IMR-90 (cell line): ENCODE measurements at regions of chr17 and their contacts with region 1.

Region 1: DNA sequence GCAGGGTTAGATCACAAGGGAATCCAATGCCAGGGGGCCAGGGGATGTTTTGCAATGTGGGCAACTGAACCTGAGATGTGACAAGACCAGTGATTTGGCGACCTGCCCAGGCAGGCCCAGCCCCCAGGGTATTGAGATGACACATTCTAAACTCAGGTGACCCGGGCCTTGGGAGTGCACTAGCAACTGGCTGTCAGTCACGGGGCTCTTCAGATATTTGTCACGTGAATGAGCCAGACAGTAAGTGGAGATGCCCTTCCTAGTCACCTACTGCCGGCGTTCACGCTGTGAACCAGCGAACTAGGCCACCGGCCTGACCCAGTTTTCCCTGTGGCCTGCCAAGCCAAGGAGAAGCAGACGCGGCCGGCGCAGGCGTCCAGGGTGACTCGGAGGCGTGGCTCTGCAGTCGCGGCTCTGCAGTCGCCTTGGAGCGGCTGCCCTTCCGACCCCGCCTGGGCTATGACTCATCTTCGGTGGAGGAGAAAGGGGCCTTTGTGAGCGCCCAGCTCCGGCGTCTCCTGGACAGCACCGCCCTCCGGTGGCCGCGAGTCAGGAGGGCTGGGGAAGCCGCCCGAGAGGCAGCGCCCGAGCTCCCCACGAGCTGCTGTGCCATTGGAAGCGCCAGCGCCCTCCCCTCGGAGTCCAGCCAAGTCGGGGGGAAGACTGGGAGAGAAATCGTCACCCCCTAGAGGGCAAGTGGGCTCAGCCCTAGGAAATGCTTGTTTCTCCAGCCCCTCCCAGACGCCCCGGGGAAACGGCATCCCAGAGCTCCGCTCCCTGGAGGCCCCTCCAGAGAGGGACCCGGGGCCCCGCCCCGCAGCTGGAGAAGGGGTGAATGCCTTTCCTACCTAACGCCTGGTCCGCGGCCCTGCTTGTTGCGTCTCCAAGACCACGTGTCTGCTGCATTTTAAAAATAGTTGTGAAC is 38.8 kb downstream of the WSB1 start:
- DNase-seq: peak; percentile 94
- ATAC-seq: peak; percentile 97
- H3K4me3 ChIP-seq: peak overlapping the region; percentile 40
- H3K27ac ChIP-seq: peak overlapping the region; percentile 48
- H3K4me1 ChIP-seq: peaks cover 4% of the 10 kb centered on the region; the same call in 1 of the 2 replicates
- H3K27me3 ChIP-seq: no peaks in the 10 kb centered on the region
- CTCF ChIP-seq: peak; percentile 96
- POLR2A ChIP-seq: peak; percentile 51
- RAD21 ChIP-seq: peak; percentile 96

Region 2: GRCh38 chr17:27199948-27200347 is 132.8 kb before region 1 on chr17:
- CTCF ChIA-PET with region 1: interaction called, 4 read pairs
- POLR2A ChIA-PET with region 1: no interaction called
- dilution Hi-C with region 1: no loop called
- in situ Hi-C with region 1: no loop called
- intact Hi-C with region 1: loop called (anchors 5 kb)
- DNase-seq: peak; percentile 4
- ATAC-seq: no peak
- H3K4me3 ChIP-seq: no peak overlapping the region
- H3K27ac ChIP-seq: no peak overlapping the region
- H3K4me1 ChIP-seq: peaks cover 2% of the 10 kb centered on the region; the same call in 1 of the 2 replicates
- H3K27me3 ChIP-seq: peaks cover 3% of the 10 kb centered on the region; the same call in 1 of the 2 replicates
- CTCF ChIP-seq: no peak
- POLR2A ChIP-seq: no peak
- RAD21 ChIP-seq: no peak

Region 3: GRCh38 chr17:27370776-27371175 is 38.0 kb after region 1 on chr17:
- CTCF ChIA-PET with region 1: no interaction called
- POLR2A ChIA-PET with region 1: no interaction called
- dilution Hi-C with region 1: no loop called
- in situ Hi-C with region 1: no loop called
- intact Hi-C with region 1: no loop called
- DNase-seq: no peak
- ATAC-seq: no peak
- H3K4me3 ChIP-seq: no peak overlapping the region
- H3K27ac ChIP-seq: no peak overlapping the region
- H3K4me1 ChIP-seq: peaks cover 2% of the 10 kb centered on the region; the same call in 1 of the 2 replicates
- H3K27me3 ChIP-seq: no peaks in the 10 kb centered on the region
- CTCF ChIP-seq: no peak
- POLR2A ChIP-seq: no peak
- RAD21 ChIP-seq: no peak

Region 4: GRCh38 chr17:27601069-27601975 is 268.6 kb after region 1 on chr17:
- CTCF ChIA-PET with region 1: interaction called, 7 read pairs
- POLR2A ChIA-PET with region 1: no interaction called
- dilution Hi-C with region 1: no loop called
- in situ Hi-C with region 1: no loop called
- intact Hi-C with region 1: loop called (anchors 1 kb)
- DNase-seq: peak; percentile 83
- ATAC-seq: peak; percentile 65
- H3K4me3 ChIP-seq: no peak overlapping the region
- H3K27ac ChIP-seq: no peak overlapping the region
- H3K4me1 ChIP-seq: peaks cover 2% of the 10 kb centered on the region; the same call in 1 of the 2 replicates
- H3K27me3 ChIP-seq: no peaks in the 10 kb centered on the region
- CTCF ChIP-seq: peak; percentile 97
- POLR2A ChIP-seq: peak; percentile 37; the same call in 1 of the 2 replicates
- RAD21 ChIP-seq: peak; percentile 97